Posterior cingulate gyrus (tissue), 11 donors: ENCODE measurements at regions of chr15 and their contacts with region 1.

Region 1: DNA sequence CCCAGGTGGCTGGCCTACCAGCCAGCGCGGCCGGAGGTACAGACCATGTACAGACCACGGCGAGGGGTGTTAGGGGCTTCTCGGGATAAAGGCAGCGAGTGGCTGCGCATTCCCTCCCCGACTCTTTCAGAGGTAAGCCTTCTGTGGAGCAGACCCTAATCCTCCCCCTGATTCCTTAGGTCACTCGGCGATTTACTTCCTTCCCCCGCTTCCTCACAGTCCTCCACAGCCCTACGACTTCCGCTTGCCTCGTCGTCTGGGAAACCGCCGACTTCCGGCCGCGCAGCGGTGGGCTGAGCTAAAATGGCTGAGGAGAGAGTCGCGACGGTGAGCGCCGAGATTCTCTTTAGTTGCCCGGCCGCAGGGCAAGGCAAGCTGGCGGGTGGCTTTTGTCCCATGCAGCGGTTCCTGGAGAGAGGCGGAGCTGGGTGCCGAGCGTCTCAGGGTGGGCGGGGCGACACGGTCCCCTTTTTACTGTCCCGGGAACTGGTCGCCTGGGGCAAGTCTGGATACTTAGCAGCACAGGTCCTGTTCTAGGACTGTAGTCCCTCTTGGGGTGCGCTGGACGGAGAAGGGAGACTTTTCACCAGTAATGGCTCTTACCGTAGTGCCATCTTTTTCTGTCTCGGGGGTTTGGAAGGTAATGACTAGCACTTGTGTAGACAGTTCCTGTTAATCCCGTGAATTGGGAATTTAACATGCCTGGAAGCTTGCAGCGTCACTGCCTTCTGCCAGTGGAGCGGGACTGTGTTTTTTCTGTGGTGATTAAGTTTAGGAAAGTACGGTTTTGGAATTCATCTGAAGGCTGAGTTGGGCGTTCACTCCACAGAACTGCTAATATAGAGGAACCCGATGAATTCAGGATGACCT is at the starts of genes BBS4 and HIGD2B:
- DNase-seq: peak; percentile 71 to 98 (median 86)

Region 2: DNA sequence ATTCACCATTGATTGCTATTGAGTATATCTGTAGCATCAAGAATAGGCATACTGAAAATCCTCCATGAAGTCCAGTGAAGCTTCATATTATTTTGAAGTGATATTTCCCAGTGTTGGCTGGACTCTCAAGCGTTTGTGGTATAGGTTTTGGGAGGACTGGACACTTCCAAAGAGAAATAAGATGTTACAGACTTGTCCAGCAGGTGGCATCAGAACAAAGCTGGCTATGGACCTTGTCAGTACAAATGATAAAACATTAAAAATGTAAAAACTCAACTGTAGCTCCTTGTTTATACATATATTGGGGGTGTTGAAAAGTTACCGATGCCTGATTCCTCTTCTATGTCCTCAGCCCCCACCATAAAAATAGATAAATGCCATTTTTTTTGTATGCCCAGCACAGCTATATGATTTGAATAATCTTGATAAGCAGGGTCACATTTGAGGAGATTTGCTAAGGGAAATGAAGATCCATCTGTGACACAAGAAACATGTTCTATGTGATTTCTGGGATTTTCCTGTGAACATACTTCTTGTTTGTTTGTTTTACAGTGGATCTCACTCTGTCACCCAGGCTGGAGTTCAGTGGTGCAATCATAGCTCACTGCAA is 86.2 kb before region 1 on chr15:
- intact Hi-C with region 1: loop called (anchors 10 kb)
- DNase-seq: peak in 3 of 10 donors; percentile 15 to 21 (median 17)